BJ (cell line): ENCODE measurements at regions of chr19 and their contacts with region 1.

Region 1: DNA sequence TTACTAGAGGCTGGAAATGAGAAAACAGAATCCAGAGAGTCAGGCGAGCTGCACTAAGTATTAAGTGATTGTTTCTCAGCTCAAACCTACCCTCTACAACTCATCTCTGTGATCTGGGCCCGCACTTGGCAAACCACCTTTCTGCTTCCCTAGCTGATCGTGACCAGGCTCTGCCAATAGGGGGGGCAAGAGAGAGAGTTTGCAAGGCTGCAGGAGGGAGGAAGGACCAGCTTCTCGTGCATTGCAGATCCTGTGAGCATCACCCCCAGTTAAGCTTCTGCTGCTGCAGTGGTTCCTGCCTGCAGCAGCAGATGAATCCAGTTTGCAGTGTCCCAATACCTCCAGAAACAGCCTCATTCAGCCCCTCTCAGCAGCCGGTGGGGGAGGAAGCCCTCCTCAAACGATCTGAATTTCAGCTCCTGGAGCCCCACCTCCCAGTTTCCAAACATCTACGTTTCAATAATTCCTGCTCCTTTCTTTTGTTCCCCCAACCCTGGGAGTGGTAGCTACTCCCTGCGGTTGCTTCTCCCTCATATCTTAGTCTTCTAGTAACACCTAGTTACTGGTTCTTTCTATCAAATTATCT is 20.0 kb downstream of the XRCC1 start:
- DNase-seq: no peak
- H3K4me3 ChIP-seq: no peak overlapping the region
- H3K27me3 ChIP-seq: no peaks in the 10 kb centered on the region
- CTCF ChIP-seq: peak; percentile 92

Region 2: DNA sequence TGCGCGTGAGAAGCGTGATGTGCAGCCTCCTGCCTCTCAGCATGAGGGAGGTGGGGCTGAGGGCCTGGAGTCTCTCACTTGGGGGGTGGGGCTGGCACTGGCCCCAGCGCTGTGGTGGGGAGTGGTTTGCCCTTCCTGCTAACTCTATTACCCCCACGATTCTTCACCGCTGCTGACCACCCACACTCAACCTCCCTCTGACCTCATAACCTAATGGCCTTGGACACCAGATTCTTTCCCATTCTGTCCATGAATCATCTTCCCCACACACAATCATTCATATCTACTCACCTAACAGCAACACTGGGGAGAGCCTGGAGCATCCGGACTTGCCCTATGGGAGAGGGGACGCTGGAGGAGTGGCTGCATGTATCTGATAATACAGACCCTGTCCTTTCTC is 193.1 kb before region 1 on chr19:
- CTCF ChIA-PET with region 1: no interaction called
- POLR2A ChIA-PET with region 1: no interaction called
- DNase-seq: no peak
- H3K4me3 ChIP-seq: no peak overlapping the region
- H3K27me3 ChIP-seq: peaks cover 2% of the 10 kb centered on the region; the same call in 1 of the 2 replicates
- CTCF ChIP-seq: no peak

Region 3: DNA sequence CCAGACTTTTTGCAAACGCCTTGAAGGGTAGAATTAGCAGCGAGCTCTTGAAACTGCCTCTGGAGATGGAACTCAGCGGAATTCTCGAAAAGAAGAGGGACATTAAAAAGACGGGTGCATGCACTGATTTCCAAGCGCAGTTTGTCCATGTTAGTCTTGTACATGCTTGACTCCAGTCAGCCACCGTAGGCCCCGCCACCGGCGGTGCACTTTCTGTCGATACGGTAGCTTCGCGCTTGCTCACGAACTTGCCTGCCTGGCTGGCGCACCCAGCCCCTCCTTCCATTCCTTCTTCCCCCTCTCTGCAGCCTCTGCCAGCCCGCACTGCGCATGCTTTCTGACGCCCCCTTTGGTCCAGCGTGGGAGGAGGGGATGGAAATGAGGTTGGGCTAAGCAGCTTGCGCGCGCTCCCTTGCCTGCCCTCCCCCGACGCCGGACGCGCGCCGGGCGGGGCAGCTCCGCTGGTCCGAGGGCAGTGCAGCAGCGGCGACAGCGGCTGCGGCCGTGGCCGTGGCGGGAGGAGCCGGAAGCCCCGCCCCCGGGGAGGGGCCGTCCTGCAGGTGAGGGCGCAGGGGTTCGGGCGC is 22.2 kb before region 1 on chr19 and contains the start of gene ZNF575:
- CTCF ChIA-PET with region 1: interaction called, 39 read pairs
- POLR2A ChIA-PET with region 1: no interaction called
- DNase-seq: peak; percentile 79
- H3K4me3 ChIP-seq: peak within 1 kb of the TSS; percentile 57
- H3K27me3 ChIP-seq: no peaks in the 10 kb centered on the region
- CTCF ChIP-seq: no peak
- polyA plus RNA-seq, gene ZNF575: 0.09 and 0.33 TPM in 2 replicates

Region 4: GRCh38 chr19:43575156-43575950 is 20.1 kb after region 1 on chr19 and contains the starts of genes PINLYP and XRCC1:
- CTCF ChIA-PET with region 1: interaction called, 32 read pairs
- POLR2A ChIA-PET with region 1: no interaction called
- DNase-seq: peak; percentile 92
- H3K4me3 ChIP-seq: peak within 1 kb of the TSS; percentile 99
- H3K27me3 ChIP-seq: no peaks in the 10 kb centered on the region
- CTCF ChIP-seq: no peak
- polyA plus RNA-seq, gene PINLYP: 2.0 and 2.2 TPM in 2 replicates
- polyA plus RNA-seq, gene XRCC1: 22.8 and 30.8 TPM in 2 replicates